Kidney (tissue), 22 donors: ENCODE measurements at regions of chr18 and their contacts with region 1.

Region 1: GRCh38 chr18:59395226-59396110 is 36.4 kb upstream of the LMAN1 start:
- DNase-seq: no peak
- H3K4me3 ChIP-seq: no peak overlapping the region
- H3K27ac ChIP-seq: no peak overlapping the region
- H3K4me1 ChIP-seq: no peaks in the 10 kb centered on the region
- H3K27me3 ChIP-seq: no peaks in the 10 kb centered on the region
- CTCF ChIP-seq: no peak

Region 2: GRCh38 chr18:59311631-59312030 is 83.8 kb before region 1 on chr18:
- intact Hi-C with region 1: loop called (anchors 10 kb)
- DNase-seq: no peak
- H3K4me3 ChIP-seq: no peak overlapping the region
- H3K27ac ChIP-seq: no peak overlapping the region
- H3K4me1 ChIP-seq: peaks cover 0 to 2% (median 0%) of the 10 kb centered on the region in 3 donors
- H3K27me3 ChIP-seq: no peaks in the 10 kb centered on the region
- CTCF ChIP-seq: no peak

Region 3: GRCh38 chr18:59340817-59341216 is 54.7 kb before region 1 on chr18:
- intact Hi-C with region 1: no loop called
- DNase-seq: no peak
- H3K4me3 ChIP-seq: no peak overlapping the region
- H3K27ac ChIP-seq: no peak overlapping the region
- H3K4me1 ChIP-seq: no peaks in the 10 kb centered on the region
- H3K27me3 ChIP-seq: no peaks in the 10 kb centered on the region
- CTCF ChIP-seq: no peak